CD8-positive, alpha-beta T cell (primary cell): ENCODE measurements at regions of chr22 and their contacts with region 1.

Region 1: GRCh38 chr22:28951969-28952521 is 68.7 kb downstream of the ZNRF3 start:
- DNase-seq: no peak
- ATAC-seq: no peak
- H3K4me3 ChIP-seq: no peak overlapping the region
- H3K4me3 Mint-ChIP-seq: no peak overlapping the region
- H3K27ac ChIP-seq: no peak overlapping the region
- H3K27ac Mint-ChIP-seq: no peak overlapping the region
- H3K4me1 ChIP-seq: peaks cover 20% of the 10 kb centered on the region
- H3K4me1 Mint-ChIP-seq: peaks cover 17% of the 10 kb centered on the region
- H3K27me3 ChIP-seq: peaks cover 23% of the 10 kb centered on the region in 2 experiments
- H3K27me3 Mint-ChIP-seq: peaks cover 76% of the 10 kb centered on the region
- CTCF ChIP-seq: no peak

Region 2: DNA sequence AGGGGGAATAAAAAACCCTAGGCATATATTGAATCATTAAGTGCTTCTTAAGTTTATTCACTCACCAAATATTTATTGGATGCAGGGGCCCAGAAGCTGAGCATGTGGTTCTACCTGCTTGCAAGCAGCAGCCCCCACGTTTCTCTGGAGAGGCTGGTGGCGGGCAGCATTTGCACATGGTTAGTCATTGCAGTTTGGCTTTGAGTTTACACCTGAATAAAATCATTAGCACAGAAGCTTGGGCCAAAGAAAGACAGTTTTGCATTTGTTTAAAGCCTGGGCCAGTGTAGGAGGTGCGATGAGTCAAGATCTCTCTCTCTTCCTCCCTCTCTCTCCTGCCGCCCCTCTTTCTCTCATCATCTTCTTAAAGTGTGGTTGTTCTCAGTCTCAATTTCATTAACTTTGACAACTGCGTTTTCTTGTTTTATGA is 37.0 kb after region 1 on chr22:
- CTCF ChIA-PET with region 1: no interaction called
- POLR2A ChIA-PET with region 1: no interaction called
- intact Hi-C with region 1: no loop called
- DNase-seq: no peak
- ATAC-seq: no peak
- H3K4me3 ChIP-seq: no peak overlapping the region
- H3K4me3 Mint-ChIP-seq: no peak overlapping the region
- H3K27ac ChIP-seq: no peak overlapping the region
- H3K27ac Mint-ChIP-seq: no peak overlapping the region
- H3K4me1 ChIP-seq: no peaks in the 10 kb centered on the region
- H3K4me1 Mint-ChIP-seq: no peaks in the 10 kb centered on the region
- H3K27me3 ChIP-seq: no peaks in the 10 kb centered on the region
- H3K27me3 Mint-ChIP-seq: peaks cover 20% of the 10 kb centered on the region
- CTCF ChIP-seq: no peak

Region 3: DNA sequence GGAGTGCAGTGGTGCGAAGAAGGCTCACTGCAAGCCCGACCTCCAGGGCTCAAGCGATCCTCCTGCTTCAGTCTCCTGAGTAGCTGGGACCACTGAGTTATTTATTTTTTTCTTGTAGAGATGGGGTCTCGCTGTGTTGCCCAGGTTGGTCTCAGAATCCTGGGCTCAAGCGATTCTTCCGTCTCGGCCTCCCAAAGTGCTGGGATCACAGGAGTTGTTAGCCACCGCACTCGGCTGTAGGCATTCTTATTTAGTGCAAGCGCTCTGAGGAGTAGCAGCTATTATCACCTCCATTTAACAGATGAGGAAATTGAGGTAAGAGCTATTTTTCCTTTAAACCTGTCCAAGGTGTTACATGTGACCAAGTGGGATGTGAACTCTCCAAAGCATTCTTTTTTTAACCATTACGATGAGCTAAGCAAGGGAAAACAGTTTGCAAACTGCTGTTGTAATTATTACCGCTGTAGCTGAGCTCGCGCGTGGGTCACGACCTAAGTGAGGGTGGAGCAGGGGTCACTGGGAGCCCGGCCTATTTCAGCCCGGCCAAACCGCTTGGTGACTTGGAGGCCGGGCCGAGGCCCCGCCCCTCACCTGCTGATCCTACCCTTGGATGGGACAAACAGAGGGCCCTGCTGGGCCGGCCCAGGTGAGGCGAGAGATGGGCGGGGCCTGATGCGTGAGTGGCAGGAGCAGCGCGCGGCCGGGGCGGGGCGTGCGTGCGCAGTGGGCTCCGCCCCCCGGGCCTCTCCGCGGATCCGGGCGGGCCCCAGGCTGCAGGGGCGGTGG is 120.3 kb after region 1 on chr22:
- CTCF ChIA-PET with region 1: no interaction called
- POLR2A ChIA-PET with region 1: no interaction called
- intact Hi-C with region 1: loop called in 1 of 2 experiments (anchors 5 kb)
- DNase-seq: peak; percentile 55 to 87 (median 78)
- ATAC-seq: peak; percentile 96
- H3K4me3 ChIP-seq: peak overlapping the region; percentile 39 to 61
- H3K4me3 Mint-ChIP-seq: peak overlapping the region; percentile 79
- H3K27ac ChIP-seq: no peak overlapping the region
- H3K27ac Mint-ChIP-seq: no peak overlapping the region
- H3K4me1 ChIP-seq: peaks cover 27% of the 10 kb centered on the region
- H3K4me1 Mint-ChIP-seq: peaks cover 23% of the 10 kb centered on the region
- H3K27me3 ChIP-seq: peaks cover 14 to 18% of the 10 kb centered on the region in 2 experiments
- H3K27me3 Mint-ChIP-seq: peaks cover 46% of the 10 kb centered on the region
- CTCF ChIP-seq: no peak